PC-9 (cell line): ENCODE measurements at regions of chr19 and their contacts with region 1.

Region 1: GRCh38 chr19:677201-677600 is 1.0 kb downstream of the FSTL3 start:
- DNase-seq: peak; percentile 70 to 92
- H3K4me3 ChIP-seq: peak overlapping the region; percentile 72
- H3K27ac ChIP-seq: peak overlapping the region; percentile 43; the same call in 1 of the 2 replicates
- H3K4me1 ChIP-seq: peaks cover 30% of the 10 kb centered on the region
- H3K27me3 ChIP-seq: no peaks in the 10 kb centered on the region
- CTCF ChIP-seq: no peak

Region 2: DNA sequence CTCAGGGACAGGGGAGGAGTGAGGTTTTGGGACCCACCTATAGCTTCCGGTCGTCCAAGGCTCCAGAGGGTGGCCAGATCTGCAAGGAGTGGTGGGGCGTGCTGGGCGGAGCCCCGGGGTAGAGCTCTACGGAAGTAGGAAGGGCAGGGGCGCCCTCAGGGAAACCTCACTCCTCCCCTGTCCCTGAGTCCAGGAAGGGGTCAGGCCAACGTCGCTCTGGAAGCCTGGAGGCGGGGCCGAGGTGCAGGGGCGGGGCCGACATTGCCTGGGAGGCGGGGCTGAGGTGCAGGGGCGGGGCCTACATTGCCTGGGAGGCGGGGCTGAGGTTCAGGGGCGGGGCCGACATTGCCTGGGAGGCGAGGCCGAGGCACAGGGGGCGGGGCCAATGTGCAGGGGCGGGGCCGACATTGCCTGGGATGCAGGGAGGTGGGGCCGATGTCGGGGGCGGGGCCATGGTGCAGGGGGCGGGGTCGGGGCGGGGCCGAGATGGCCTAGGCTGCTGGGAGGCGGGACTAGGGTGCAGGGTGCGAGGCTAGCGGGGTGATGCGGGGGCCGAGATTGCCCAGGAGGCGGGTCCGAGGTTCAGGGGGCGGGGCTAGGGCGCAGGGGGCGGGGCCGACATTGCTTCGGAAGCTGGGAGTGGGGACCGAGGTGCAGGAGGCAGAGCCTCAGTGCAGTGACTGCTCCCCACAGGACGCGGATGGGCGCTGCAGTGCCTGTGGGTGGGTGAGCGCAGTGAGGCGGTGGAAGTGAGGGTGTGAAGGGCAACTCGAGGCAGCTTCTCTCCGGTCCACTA is 26.6 kb after region 1 on chr19:
- CTCF ChIA-PET with region 1: no interaction called
- POLR2A ChIA-PET with region 1: no interaction called
- intact Hi-C with region 1: no loop called
- DNase-seq: peak; percentile 43 to 62
- H3K4me3 ChIP-seq: no peak overlapping the region; the same call in 1 of the 2 replicates
- H3K27ac ChIP-seq: no peak overlapping the region
- H3K4me1 ChIP-seq: no peaks in the 10 kb centered on the region
- H3K27me3 ChIP-seq: no peaks in the 10 kb centered on the region
- CTCF ChIP-seq: no peak

Region 3: DNA sequence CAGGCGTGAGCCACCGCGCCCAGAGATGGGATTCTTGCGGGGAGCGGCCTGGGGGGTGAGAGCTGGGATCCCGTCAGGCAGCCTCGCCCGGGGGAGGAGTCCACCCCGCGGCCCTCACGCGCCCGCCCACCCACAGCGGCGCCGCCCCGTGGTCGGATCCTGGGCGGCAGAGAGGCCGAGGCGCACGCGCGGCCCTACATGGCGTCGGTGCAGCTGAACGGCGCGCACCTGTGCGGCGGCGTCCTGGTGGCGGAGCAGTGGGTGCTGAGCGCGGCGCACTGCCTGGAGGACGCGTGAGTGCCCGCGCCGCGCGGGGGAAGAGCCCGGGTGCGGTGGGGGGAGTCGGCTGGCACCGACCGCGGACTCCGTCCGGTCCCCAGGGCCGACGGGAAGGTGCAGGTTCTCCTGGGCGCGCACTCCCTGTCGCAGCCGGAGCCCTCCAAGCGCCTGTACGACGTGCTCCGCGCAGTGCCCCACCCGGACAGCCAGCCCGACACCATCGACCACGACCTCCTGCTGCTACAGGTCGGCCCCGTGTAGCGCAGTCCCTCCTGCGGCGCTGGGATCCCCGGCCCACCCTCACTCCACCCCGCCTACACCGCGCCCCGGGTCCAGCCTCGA is 183.4 kb after region 1 on chr19:
- CTCF ChIA-PET with region 1: no interaction called
- POLR2A ChIA-PET with region 1: interaction called, 10 read pairs
- intact Hi-C with region 1: no loop called
- DNase-seq: peak; percentile 54 to 92
- H3K4me3 ChIP-seq: peak overlapping the region; percentile 39; the same call in 1 of the 2 replicates
- H3K27ac ChIP-seq: no peak overlapping the region
- H3K4me1 ChIP-seq: peaks cover 12% of the 10 kb centered on the region
- H3K27me3 ChIP-seq: no peaks in the 10 kb centered on the region
- CTCF ChIP-seq: no peak

Region 4: GRCh38 chr19:991174-991918 is 314.1 kb after region 1 on chr19:
- CTCF ChIA-PET with region 1: no interaction called
- POLR2A ChIA-PET with region 1: no interaction called
- intact Hi-C with region 1: no loop called
- DNase-seq: peak in 1 of 2 experiments; percentile 24
- H3K4me3 ChIP-seq: no peak overlapping the region
- H3K27ac ChIP-seq: no peak overlapping the region
- H3K4me1 ChIP-seq: peaks cover 24% of the 10 kb centered on the region
- H3K27me3 ChIP-seq: no peaks in the 10 kb centered on the region
- CTCF ChIP-seq: no peak